G401 (cell line): ENCODE measurements at regions of chr12 and their contacts with region 1.

Region 1: GRCh38 chr12:62581288-62582064 is 114.8 kb downstream of the MON2 start:
- DNase-seq: peak; percentile 82

Region 2: GRCh38 chr12:62799126-62799736 is 217.8 kb after region 1 on chr12:
- in situ Hi-C with region 1: loop called (anchors 10 kb)
- DNase-seq: peak; percentile 93